Right cardiac atrium (tissue), 5 donors: ENCODE measurements at regions of chr3 and their contacts with region 1.

Region 1: DNA sequence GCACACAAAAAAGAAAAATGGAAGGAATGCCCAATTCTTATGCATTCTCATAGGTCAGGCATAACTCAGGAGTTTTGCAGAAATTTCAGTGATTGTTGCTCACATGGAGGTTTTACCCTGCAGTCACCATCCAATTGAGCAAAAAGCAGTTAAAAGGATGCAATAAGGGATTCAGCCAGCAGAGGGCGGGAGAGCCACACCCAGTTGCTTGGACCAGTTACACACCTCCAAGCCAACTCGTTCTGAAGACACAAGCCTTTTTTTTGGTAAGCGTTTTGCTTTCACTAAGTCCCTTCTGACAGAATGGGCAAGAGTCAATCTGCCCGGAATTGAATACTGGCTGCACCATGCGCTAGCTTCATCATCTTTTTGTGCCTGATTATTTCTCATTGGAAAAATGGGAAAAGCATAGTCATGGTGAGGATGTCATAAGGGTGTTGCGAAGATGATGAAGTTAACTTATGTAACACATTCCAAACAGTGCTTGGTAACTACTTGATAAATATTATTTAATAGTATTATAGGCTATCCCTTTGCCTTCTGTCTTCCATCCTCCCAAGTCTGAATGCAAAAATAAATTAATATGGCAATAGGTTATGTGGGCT is 154.4 kb upstream of the SGO1 start:
- DNase-seq: peak; percentile 47 to 71 (median 66)
- ATAC-seq: peak; percentile 67
- H3K4me3 ChIP-seq: no peak overlapping the region
- H3K27ac ChIP-seq: no peak overlapping the region
- H3K4me1 ChIP-seq: no peaks in the 10 kb centered on the region
- H3K27me3 ChIP-seq: no peaks in the 10 kb centered on the region

Region 2: DNA sequence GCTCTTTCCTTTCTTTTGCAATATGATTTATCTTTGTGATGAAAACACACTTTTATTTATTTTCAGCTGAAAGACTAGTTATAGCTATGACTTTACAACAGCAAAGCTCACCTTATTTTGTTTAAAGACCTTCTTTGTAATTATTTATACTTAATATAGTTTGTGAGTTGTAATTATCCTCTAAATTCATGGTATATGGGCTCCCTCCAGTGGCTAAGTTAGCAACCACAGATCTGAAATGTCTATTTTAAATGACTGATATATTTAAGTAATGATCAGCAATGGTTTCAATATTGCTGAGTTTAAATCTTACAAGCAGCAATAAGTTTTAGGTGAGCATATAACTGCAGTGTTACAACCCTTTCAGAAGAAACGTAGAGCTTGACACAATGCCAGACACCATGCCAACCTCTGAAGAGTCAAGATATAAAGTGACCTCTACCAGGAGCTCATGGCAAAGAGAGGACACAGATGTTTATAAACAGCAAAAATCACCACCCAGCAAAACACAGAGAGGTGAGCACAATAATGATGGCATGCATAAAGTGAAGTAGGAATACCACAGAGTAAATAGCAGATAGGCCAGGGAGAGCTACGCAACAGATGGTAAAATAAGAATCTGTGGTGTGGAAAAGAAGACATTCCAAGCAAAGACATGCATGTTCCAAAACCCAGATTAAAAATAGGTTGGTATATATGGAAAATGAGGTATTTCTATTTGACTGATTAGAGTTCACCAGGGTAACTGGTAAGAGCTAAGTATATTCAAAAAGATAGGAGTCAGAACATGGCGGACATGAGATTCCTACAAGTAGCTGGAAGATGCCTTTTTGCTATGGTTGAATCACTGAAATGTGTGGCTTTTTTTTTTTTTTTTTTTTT is 1554.3 kb after region 1 on chr3:
- intact Hi-C with region 1: loop called in 1 of 4 experiments (anchors 5 kb)
- DNase-seq: no peak
- ATAC-seq: peak in 1 of 2 donors; percentile 40
- H3K4me3 ChIP-seq: no peak overlapping the region
- H3K27ac ChIP-seq: no peak overlapping the region
- H3K4me1 ChIP-seq: no peaks in the 10 kb centered on the region
- H3K27me3 ChIP-seq: no peaks in the 10 kb centered on the region

Region 3: GRCh38 chr3:22117751-22118346 is 1777.4 kb after region 1 on chr3:
- intact Hi-C with region 1: loop called in 2 of 4 experiments (anchors 5 to 10 kb)
- DNase-seq: no peak
- ATAC-seq: no peak
- H3K4me3 ChIP-seq: no peak overlapping the region
- H3K27ac ChIP-seq: no peak overlapping the region
- H3K4me1 ChIP-seq: no peaks in the 10 kb centered on the region
- H3K27me3 ChIP-seq: no peaks in the 10 kb centered on the region